ENCODE measurements at regions of chr10 and their contacts with region 1.

Region 1: GRCh38 chr10:69045441-69046300 is 42.2 kb upstream of the SRGN start:
- DNase-seq: peak; percentile 68
- H3K4me3 Mint-ChIP-seq: peak overlapping the region; percentile 71
- H3K27ac Mint-ChIP-seq: peak overlapping the region; percentile 97
- H3K4me1 Mint-ChIP-seq: peaks cover 64% of the 10 kb centered on the region
- H3K27me3 Mint-ChIP-seq: no peaks in the 10 kb centered on the region

Region 2: GRCh38 chr10:68871731-68872342 is 173.8 kb before region 1 on chr10:
- CTCF ChIA-PET with region 1: no interaction called
- POLR2A ChIA-PET with region 1: no interaction called
- intact Hi-C with region 1: no loop called
- DNase-seq: no peak
- H3K4me3 Mint-ChIP-seq: no peak overlapping the region
- H3K27ac Mint-ChIP-seq: no peak overlapping the region
- H3K4me1 Mint-ChIP-seq: peaks cover 9% of the 10 kb centered on the region
- H3K27me3 Mint-ChIP-seq: no peaks in the 10 kb centered on the region

Region 3: DNA sequence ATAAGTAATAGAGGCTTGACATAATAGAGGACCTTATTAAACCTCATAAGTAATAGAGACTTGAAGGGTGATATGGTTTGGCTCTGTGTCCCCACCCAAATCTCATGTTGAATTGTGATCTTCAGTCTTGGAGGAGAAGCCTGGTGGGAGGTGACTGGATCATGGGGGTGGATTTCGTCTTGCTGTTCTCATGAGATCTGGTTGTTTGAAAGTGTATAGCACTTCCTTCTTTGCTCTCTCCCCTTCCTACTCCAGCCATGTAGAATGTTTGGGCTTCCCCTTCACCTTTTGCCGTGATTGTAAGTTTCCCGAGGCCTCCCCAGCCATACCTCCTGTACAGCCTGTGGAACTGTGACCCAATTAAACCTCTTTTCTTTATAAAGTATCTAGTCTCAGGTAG is 48.5 kb before region 1 on chr10:
- CTCF ChIA-PET with region 1: no interaction called
- POLR2A ChIA-PET with region 1: no interaction called
- intact Hi-C with region 1: loop called (anchors 1 kb)
- DNase-seq: peak; percentile 33
- H3K4me3 Mint-ChIP-seq: peak overlapping the region; percentile 40
- H3K27ac Mint-ChIP-seq: peak overlapping the region; percentile 94
- H3K4me1 Mint-ChIP-seq: peaks cover 52% of the 10 kb centered on the region
- H3K27me3 Mint-ChIP-seq: no peaks in the 10 kb centered on the region

Region 4: GRCh38 chr10:69004821-69005220 is 40.9 kb before region 1 on chr10:
- CTCF ChIA-PET with region 1: interaction called, 13 read pairs
- POLR2A ChIA-PET with region 1: interaction called, 4 read pairs
- intact Hi-C with region 1: loop called (anchors 2 kb)
- DNase-seq: no peak
- H3K4me3 Mint-ChIP-seq: no peak overlapping the region
- H3K27ac Mint-ChIP-seq: no peak overlapping the region
- H3K4me1 Mint-ChIP-seq: peaks cover 15% of the 10 kb centered on the region
- H3K27me3 Mint-ChIP-seq: no peaks in the 10 kb centered on the region

Region 5: GRCh38 chr10:69025370-69025896 is 20.2 kb before region 1 on chr10:
- CTCF ChIA-PET with region 1: no interaction called
- POLR2A ChIA-PET with region 1: interaction called, 9 read pairs
- intact Hi-C with region 1: loop called (anchors 1 kb)
- DNase-seq: no peak
- H3K4me3 Mint-ChIP-seq: no peak overlapping the region
- H3K27ac Mint-ChIP-seq: no peak overlapping the region
- H3K4me1 Mint-ChIP-seq: peaks cover 15% of the 10 kb centered on the region
- H3K27me3 Mint-ChIP-seq: no peaks in the 10 kb centered on the region

Region 6: GRCh38 chr10:69061305-69062161 is 15.9 kb after region 1 on chr10:
- CTCF ChIA-PET with region 1: interaction called, 17 read pairs
- POLR2A ChIA-PET with region 1: interaction called, 86 read pairs
- intact Hi-C with region 1: loop called (anchors 1 kb)
- DNase-seq: peak; percentile 49
- H3K4me3 Mint-ChIP-seq: peak overlapping the region; percentile 61
- H3K27ac Mint-ChIP-seq: peak overlapping the region; percentile 70
- H3K4me1 Mint-ChIP-seq: peaks cover 62% of the 10 kb centered on the region
- H3K27me3 Mint-ChIP-seq: no peaks in the 10 kb centered on the region

Region 7: GRCh38 chr10:69092959-69093850 is 47.5 kb after region 1 on chr10:
- CTCF ChIA-PET with region 1: interaction called, 62 read pairs
- POLR2A ChIA-PET with region 1: interaction called, 178 read pairs
- intact Hi-C with region 1: no loop called
- DNase-seq: peak; percentile 86
- H3K4me3 Mint-ChIP-seq: peak overlapping the region; percentile 59
- H3K27ac Mint-ChIP-seq: peak overlapping the region; percentile 84
- H3K4me1 Mint-ChIP-seq: peaks cover 54% of the 10 kb centered on the region
- H3K27me3 Mint-ChIP-seq: no peaks in the 10 kb centered on the region

Region 8: GRCh38 chr10:70478191-70479164 is 1432.8 kb after region 1 on chr10 and contains the start of gene PALD1:
- CTCF ChIA-PET with region 1: no interaction called
- POLR2A ChIA-PET with region 1: no interaction called
- intact Hi-C with region 1: no loop called
- DNase-seq: peak; percentile 49
- H3K4me3 Mint-ChIP-seq: peak within 1 kb of the TSS; percentile 65
- H3K27ac Mint-ChIP-seq: peak within 1 kb of the TSS; percentile 55
- H3K4me1 Mint-ChIP-seq: peaks cover 32% of the 10 kb centered on the region
- H3K27me3 Mint-ChIP-seq: peaks cover 10% of the 10 kb centered on the region
- total RNA-seq, gene PALD1: 0.41 to 0.48 TPM

Measured in activated CD4-positive, alpha-beta memory T cell treated with anti-CD3 and anti-CD28 coated beads for 36 hours (primary cell).